Right ventricle myocardium inferior (tissue), 1 donor: ENCODE measurements at regions of chr3 and their contacts with region 1.

Region 1: GRCh38 chr3:124351430-124352148 is 359.7 kb upstream of the ROPN1 start:
- DNase-seq: no peak
- ATAC-seq: peak; percentile 60

Region 2: DNA sequence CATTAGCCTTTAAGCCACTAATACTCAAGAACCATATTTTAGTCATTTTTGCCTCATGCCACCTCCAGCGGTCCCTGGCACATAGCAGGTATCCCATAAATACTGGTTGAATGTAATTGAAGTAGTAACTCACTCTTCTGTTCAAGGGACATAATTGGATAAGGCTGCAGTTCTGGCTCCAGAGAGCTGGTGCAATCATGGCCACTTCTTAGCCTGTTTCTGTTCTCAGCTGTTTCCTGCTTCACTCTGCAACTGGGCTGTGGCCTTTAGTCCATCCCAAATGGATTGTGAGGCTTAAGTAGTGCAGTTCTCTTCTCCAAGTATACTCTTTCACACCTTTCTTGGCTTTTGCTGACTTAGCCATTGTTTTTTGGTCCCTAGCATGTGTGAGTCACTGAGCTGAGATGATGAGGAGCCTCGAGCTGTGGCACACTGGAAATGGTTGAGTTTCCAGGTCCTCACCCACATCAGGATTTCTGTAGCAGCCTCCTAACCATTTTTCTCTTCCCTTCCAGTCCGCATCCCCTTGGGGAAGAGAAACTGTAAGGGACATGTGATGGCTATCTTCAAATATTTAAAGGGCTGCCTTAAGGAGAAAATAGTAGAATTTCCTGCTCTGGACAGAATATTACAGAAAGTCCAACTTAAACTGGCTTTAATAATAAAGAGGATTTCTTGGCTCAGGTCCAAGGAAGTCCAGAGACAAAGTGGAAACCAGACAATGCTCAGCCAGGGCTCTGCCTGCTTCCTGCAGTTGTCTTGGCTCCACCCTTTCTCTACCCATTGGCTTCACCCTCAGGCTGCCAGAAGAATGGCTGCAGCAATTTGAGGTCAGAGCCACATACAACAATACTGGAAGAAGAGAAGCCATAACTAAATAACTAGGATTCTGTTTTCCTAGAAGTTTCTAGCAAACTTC is 54.3 kb before region 1 on chr3:
- intact Hi-C with region 1: no loop called
- DNase-seq: no peak
- ATAC-seq: no peak

Region 3: GRCh38 chr3:124395584-124396338 is 44.2 kb after region 1 on chr3:
- intact Hi-C with region 1: no loop called
- DNase-seq: no peak
- ATAC-seq: peak; percentile 83

Region 4: DNA sequence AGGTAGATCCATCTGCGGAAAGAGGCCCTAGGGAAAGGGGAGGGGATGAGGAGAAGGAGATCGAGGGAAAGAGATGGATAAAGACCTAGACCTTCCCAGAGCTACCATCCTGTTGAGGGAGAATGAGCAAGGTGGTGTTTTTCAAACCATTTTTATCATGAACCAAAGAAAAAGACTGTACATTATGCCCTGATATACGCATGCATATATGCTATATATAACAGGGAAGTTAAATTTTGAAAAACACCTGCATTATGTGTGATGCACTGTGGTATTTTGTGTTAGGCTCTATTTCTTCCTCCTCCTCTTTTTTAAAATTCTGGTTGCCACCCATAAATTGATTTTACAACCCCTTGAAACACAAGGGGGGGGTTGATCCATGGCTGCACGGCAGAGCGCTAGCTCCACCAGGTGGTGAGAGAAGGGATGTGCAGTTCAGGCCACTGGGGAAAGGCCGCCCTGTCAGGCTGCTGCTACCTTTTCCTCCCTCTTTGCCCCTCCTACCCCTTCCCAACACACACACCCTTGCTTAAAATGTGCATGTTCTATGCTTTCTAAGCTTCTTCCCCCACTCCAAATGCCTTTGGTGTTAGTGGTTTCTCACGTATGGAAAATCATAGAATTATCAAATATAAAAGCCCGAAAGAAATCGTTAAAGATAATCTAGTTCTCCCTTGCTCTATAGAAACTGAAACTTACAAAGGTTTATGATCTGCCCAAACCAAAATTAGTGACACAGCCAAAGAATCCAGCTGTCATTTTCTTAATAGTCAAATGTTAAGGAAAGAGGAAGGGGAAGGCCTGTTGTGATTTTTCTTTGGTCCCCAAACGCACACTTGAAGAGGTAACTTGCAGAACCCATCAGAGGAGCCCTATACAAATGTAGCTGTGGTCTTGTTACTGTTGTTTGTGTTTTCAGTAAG is 116.7 kb after region 1 on chr3:
- intact Hi-C with region 1: loop called (anchors 1 kb)
- DNase-seq: no peak
- ATAC-seq: no peak

Region 5: GRCh38 chr3:124552239-124552638 is 200.7 kb after region 1 on chr3:
- intact Hi-C with region 1: loop called (anchors 2 kb)
- DNase-seq: no peak
- ATAC-seq: peak; percentile 49

Region 6: DNA sequence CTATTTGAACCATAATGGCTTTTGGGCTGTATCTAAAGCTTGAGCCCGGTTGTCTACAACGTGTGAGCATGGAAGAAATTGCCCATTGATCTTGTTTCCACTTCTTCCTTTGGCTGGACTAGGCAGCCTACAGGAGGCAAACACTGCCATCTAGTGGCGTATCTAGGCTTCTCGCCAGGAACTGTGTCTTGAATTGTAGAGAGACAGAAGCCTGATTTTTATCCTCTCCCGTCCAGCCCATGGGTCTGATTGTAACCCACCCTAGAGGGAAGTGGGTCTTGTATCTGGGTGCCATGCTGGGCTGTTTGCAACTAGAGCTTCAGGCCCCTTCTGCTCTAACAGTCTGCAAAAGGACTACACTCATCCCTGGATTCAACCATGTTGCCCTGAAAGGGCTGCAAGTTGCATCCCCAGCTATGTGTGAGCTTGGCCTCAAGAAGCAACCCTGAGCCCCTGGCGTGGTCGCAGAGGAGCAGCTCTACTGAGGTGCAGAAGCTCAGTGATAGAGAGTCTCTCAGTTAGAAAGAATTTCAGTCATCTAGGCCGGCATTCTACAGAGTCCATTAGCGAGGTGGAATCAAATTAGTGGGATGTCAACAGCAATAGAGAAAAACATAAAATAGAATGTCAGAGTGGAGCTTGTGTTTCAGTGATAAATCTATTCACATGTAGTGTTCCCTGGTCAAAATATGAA is 208.4 kb after region 1 on chr3:
- intact Hi-C with region 1: loop called (anchors 2 kb)
- DNase-seq: no peak
- ATAC-seq: peak; percentile 68